Kidney (tissue), 22 donors: ENCODE measurements at regions of chr20 and their contacts with region 1.

Region 1: GRCh38 chr20:22586645-22587310 is 2.4 kb upstream of the FOXA2 start:
- DNase-seq: peak in 3 of 5 donors; percentile 51 to 68 (median 57)
- H3K4me3 ChIP-seq: no peak overlapping the region
- H3K27ac ChIP-seq: no peak overlapping the region
- H3K4me1 ChIP-seq: peaks cover 0 to 12% (median 0%) of the 10 kb centered on the region in 3 donors
- H3K27me3 ChIP-seq: peaks cover 59% of the 10 kb centered on the region
- CTCF ChIP-seq: peak; percentile 57

Region 2: GRCh38 chr20:22333885-22334545 is 252.8 kb before region 1 on chr20:
- intact Hi-C with region 1: loop called (anchors 10 kb)
- DNase-seq: peak in 4 of 5 donors; percentile 65 to 73 (median 70)
- H3K4me3 ChIP-seq: no peak overlapping the region
- H3K27ac ChIP-seq: no peak overlapping the region
- H3K4me1 ChIP-seq: no peaks in the 10 kb centered on the region
- H3K27me3 ChIP-seq: no peaks in the 10 kb centered on the region
- CTCF ChIP-seq: peak; percentile 58

Region 3: GRCh38 chr20:22846863-22847262 is 260.1 kb after region 1 on chr20:
- intact Hi-C with region 1: no loop called
- DNase-seq: no peak
- H3K4me3 ChIP-seq: no peak overlapping the region
- H3K27ac ChIP-seq: no peak overlapping the region
- H3K4me1 ChIP-seq: no peaks in the 10 kb centered on the region
- H3K27me3 ChIP-seq: no peaks in the 10 kb centered on the region
- CTCF ChIP-seq: no peak

Region 4: GRCh38 chr20:23225407-23226072 is 638.8 kb after region 1 on chr20:
- intact Hi-C with region 1: no loop called
- DNase-seq: no peak
- H3K4me3 ChIP-seq: no peak overlapping the region
- H3K27ac ChIP-seq: no peak overlapping the region
- H3K4me1 ChIP-seq: no peaks in the 10 kb centered on the region
- H3K27me3 ChIP-seq: no peaks in the 10 kb centered on the region
- CTCF ChIP-seq: no peak